Activated B cell treated with CpG ODN at 0.5 μM for 24 hours (primary cell): ENCODE measurements at regions of chr1 and their contacts with region 1.

Region 1: GRCh38 chr1:108691942-108692723 is at the start of gene PRPF38B:
- DNase-seq: peak; percentile 91
- ATAC-seq: peak; percentile 89
- H3K4me3 Mint-ChIP-seq: peak within 1 kb of the TSS; percentile 99
- H3K27ac Mint-ChIP-seq: peak within 1 kb of the TSS; percentile 98
- H3K4me1 Mint-ChIP-seq: peaks cover 46% of the 10 kb centered on the region
- H3K27me3 Mint-ChIP-seq: no peaks in the 10 kb centered on the region
- CTCF ChIP-seq: no peak
- total RNA-seq, gene PRPF38B: 77.3 and 88.1 TPM in 2 replicates

Region 2: DNA sequence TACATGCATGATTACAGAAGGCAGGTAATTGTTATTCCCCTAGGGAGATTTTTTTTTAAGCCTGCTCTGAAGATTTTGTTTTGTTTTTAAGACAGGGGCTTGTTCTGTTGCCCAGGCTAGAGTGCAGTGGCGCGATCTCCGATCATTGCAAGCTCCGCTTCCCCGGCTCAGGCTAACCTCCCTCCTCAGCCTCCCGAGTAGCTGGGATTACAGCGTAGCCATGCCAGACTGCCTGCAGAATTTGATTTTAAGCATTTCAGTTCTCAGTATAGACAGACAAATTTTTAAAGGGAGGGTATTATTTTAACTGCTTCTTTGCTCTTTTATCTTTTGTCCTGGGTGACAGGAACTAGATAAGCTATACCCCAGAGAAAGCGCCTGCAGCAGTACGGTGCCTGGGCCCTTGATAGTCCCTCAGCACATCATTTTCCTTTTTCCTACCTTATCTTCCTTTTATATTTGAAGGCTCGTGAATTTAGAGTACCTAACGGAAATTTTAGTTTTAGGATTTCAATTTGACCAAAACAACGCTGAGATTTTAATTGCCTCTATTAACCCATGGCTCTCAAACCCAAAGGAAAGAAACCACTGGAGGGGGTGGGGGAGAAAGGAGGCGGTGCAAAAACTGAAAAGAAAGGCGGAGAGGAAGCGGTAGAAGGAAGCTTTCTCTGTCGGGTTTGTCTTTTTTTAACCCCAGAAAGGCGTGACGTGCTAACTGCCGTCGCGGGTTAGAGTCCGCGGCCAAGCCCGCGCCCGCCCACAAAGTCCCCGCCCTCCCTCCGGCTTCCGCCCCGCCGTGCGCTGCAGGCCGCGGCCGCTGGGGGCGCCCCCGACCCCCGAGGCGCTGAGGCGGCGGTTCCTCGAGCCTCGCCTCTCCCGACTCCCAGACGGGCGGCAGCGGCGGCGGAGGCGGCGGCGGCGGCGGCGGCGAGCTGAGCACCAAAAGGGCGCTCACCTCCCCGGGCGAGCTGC is 132.6 kb before region 1 on chr1 and contains the start of gene EEIG2:
- CTCF ChIA-PET with region 1: interaction called, 4 read pairs
- POLR2A ChIA-PET with region 1: interaction called, 38 read pairs
- intact Hi-C with region 1: loop called (anchors 2 kb)
- DNase-seq: peak; percentile 90
- ATAC-seq: peak; percentile 88
- H3K4me3 Mint-ChIP-seq: peak within 1 kb of the TSS; percentile 93
- H3K27ac Mint-ChIP-seq: peak within 1 kb of the TSS; percentile 90
- H3K4me1 Mint-ChIP-seq: peaks cover 24% of the 10 kb centered on the region
- H3K27me3 Mint-ChIP-seq: no peaks in the 10 kb centered on the region
- CTCF ChIP-seq: no peak
- total RNA-seq, gene EEIG2: 7.0 and 7.1 TPM in 2 replicates

Region 3: DNA sequence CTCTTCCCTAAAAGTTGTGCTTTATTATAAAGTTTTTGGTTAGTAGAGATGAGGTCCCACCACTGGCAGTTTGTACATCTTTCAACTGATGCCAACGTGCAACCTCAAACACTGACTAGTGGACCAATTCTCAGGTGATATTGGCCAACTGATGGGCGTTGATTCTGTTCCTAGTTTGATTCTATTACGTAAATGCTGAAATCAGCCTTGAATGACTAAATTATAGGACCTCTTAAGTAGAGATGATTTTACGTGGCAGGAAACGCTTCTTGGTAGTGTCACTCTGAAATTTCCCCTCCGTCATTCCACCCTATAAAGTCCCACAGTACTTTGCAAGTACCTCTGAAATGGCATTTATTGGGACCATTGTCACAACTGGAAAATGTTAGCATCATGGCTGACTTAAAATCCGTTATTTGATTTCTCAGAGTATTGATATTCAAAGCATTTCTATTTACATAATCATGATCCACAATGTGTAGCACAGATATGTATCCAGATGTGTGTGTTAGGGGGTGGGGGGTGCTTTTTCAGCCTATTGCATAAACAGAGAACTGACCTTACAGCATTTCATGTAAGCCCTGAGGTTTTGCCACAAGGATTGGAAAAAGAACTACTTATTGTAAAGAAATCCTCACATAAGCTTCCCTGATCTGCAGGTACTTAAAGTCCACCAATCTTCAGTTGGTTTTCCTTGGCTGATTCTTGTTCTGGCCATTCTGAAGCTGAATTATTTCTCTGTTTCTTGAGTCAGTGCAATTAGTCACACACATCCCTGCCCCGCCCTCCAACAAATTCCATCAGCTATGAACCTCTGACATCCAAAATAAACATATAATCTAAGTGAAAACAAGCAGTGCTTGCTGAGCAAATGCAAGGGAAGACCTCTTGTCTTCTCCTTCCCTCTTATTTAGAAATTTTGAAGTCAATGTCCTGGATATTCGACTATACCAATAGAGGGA is 12.1 kb after region 1 on chr1:
- CTCF ChIA-PET with region 1: no interaction called
- POLR2A ChIA-PET with region 1: interaction called, 23 read pairs
- intact Hi-C with region 1: no loop called
- DNase-seq: no peak
- ATAC-seq: no peak
- H3K4me3 Mint-ChIP-seq: no peak overlapping the region
- H3K27ac Mint-ChIP-seq: no peak overlapping the region
- H3K4me1 Mint-ChIP-seq: peaks cover 19% of the 10 kb centered on the region
- H3K27me3 Mint-ChIP-seq: peaks cover 3% of the 10 kb centered on the region
- CTCF ChIP-seq: no peak

Region 4: GRCh38 chr1:108777839-108778238 is 85.7 kb after region 1 on chr1:
- CTCF ChIA-PET with region 1: no interaction called
- POLR2A ChIA-PET with region 1: no interaction called
- intact Hi-C with region 1: no loop called
- DNase-seq: no peak
- ATAC-seq: no peak
- H3K4me3 Mint-ChIP-seq: no peak overlapping the region
- H3K27ac Mint-ChIP-seq: no peak overlapping the region
- H3K4me1 Mint-ChIP-seq: no peaks in the 10 kb centered on the region
- H3K27me3 Mint-ChIP-seq: no peaks in the 10 kb centered on the region
- CTCF ChIP-seq: no peak

Region 5: DNA sequence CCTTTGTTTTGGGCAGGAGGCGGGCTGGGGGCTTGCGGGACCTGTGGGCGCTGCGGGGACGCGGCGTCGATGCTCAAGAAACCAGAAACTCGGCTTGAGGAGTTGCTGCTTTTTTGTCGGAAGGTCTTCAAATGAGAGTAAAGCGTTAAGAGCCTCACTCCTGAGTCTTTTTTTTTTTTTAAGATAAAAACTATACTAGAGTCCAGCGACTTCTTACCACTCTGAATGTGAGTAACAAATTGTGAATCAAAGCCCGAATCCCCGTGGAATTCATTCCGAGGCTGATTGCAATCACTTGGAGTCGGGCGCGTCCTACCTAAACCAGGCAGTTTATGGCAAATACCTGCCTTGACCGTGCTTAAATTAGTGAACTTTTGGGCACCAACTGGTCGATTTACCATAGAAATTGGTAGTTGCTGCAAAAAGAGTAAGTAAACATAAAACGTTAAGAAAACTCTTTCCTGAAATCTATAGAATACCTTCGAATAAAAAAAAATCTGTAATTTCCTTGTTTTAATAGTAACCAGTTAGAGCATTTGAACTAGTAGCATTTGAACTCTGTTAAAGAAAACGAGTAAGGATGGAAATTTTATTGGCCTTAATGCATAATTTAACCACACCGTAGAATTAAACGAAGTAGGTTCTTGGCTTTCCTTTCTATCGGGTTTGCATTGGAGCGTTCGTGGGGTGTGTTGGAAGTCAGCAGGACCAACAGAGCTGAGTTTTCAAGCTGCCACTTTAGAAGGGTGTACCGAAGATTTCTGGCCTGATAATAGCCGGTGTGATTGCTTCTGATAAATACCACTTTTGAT is 185.4 kb after region 1 on chr1:
- CTCF ChIA-PET with region 1: no interaction called
- POLR2A ChIA-PET with region 1: interaction called, 5 read pairs
- intact Hi-C with region 1: loop called (anchors 1 kb)
- DNase-seq: no peak
- ATAC-seq: no peak
- H3K4me3 Mint-ChIP-seq: peak overlapping the region; percentile 97
- H3K27ac Mint-ChIP-seq: peak overlapping the region; percentile 85
- H3K4me1 Mint-ChIP-seq: peaks cover 13% of the 10 kb centered on the region
- H3K27me3 Mint-ChIP-seq: no peaks in the 10 kb centered on the region
- CTCF ChIP-seq: no peak

Region 6: GRCh38 chr1:109041621-109042468 is 349.7 kb after region 1 on chr1 and contains the start of gene WDR47:
- CTCF ChIA-PET with region 1: no interaction called
- POLR2A ChIA-PET with region 1: interaction called, 8 read pairs
- intact Hi-C with region 1: loop called (anchors 5 kb)
- DNase-seq: peak; percentile 89
- ATAC-seq: peak; percentile 96
- H3K4me3 Mint-ChIP-seq: peak within 1 kb of the TSS; percentile 88
- H3K27ac Mint-ChIP-seq: peak within 1 kb of the TSS; percentile 60
- H3K4me1 Mint-ChIP-seq: peaks cover 15% of the 10 kb centered on the region
- H3K27me3 Mint-ChIP-seq: no peaks in the 10 kb centered on the region
- CTCF ChIP-seq: no peak
- total RNA-seq, gene WDR47: 10.3 and 10.9 TPM in 2 replicates

Region 7: GRCh38 chr1:109099938-109100773 is 408.0 kb after region 1 on chr1:
- CTCF ChIA-PET with region 1: interaction called, 5 read pairs
- POLR2A ChIA-PET with region 1: interaction called, 25 read pairs
- intact Hi-C with region 1: no loop called
- DNase-seq: peak; percentile 93
- ATAC-seq: peak; percentile 88
- H3K4me3 Mint-ChIP-seq: peak overlapping the region; percentile 95
- H3K27ac Mint-ChIP-seq: peak overlapping the region; percentile 98
- H3K4me1 Mint-ChIP-seq: peaks cover 19% of the 10 kb centered on the region
- H3K27me3 Mint-ChIP-seq: no peaks in the 10 kb centered on the region
- CTCF ChIP-seq: peak; percentile 37

Region 8: GRCh38 chr1:109426278-109427170 is 734.4 kb after region 1 on chr1 and contains the start of gene PSMA5:
- CTCF ChIA-PET with region 1: no interaction called
- POLR2A ChIA-PET with region 1: no interaction called
- intact Hi-C with region 1: loop called (anchors 2 kb)
- DNase-seq: peak; percentile 81
- ATAC-seq: peak; percentile 97
- H3K4me3 Mint-ChIP-seq: peak within 1 kb of the TSS; percentile 96
- H3K27ac Mint-ChIP-seq: peak within 1 kb of the TSS; percentile 97
- H3K4me1 Mint-ChIP-seq: peaks cover 37% of the 10 kb centered on the region
- H3K27me3 Mint-ChIP-seq: no peaks in the 10 kb centered on the region
- CTCF ChIP-seq: no peak
- total RNA-seq, gene PSMA5: 105 and 125 TPM in 2 replicates

Region 9: DNA sequence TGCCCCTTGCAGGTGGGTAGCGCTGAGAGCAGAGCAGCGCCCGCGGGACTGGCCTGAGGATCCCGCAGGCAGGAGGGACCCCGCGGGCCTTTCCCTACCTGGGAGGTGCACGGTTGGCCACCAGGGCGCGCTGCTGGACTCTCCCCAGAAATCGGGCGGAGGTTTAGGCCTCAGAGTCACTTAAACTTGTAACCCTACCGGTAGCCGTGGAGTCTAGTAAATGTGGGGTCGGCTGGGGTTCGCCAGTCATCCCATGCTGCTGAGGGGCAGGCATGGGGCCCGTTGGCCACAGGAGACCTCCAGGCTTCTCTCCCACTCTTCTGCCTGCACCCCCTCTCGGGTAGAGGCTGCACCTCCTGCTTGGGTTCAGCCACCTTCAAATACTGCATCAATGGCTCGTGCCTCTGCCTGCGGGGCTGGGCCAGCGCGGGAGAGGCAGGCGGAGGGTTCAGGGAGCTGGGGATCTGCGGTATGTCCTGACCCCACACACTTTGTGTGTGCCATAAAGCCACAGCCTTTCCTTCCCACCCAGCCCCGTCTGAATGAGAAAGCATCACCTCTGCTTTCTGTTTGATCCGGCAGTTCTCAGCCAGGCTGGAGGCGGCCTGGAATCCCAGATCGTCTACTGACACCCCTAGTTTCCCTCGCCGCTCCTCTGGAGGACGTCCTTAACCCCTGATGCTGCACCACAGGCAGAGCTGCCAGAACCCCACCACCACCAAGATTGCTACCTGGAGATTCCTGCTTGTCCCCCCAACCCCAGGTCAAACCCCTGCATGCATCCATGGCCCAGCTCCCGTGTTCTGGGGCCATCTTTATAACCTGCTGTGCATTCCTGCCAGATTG is 951.5 kb after region 1 on chr1:
- CTCF ChIA-PET with region 1: no interaction called
- POLR2A ChIA-PET with region 1: no interaction called
- intact Hi-C with region 1: no loop called
- DNase-seq: peak; percentile 81
- ATAC-seq: peak; percentile 90
- H3K4me3 Mint-ChIP-seq: peak overlapping the region; percentile 24
- H3K27ac Mint-ChIP-seq: no peak overlapping the region
- H3K4me1 Mint-ChIP-seq: peaks cover 19% of the 10 kb centered on the region
- H3K27me3 Mint-ChIP-seq: peaks cover 2% of the 10 kb centered on the region
- CTCF ChIP-seq: peak; percentile 95